Heart right ventricle (tissue), 16 donors: ENCODE measurements at regions of chr17 and their contacts with region 1.

Region 1: GRCh38 chr17:36183001-36183971 is 6.8 kb upstream of the TBC1D3B start:
- DNase-seq: peak; percentile 73 to 85
- ATAC-seq: peak; percentile 84 to 91 (median 88)
- H3K4me3 ChIP-seq: peak overlapping the region; percentile 30 to 87 (median 64)
- H3K27ac ChIP-seq: peak overlapping the region in 6 of 10 donors; percentile 51 to 90 (median 70)
- H3K4me1 ChIP-seq: peaks cover 0 to 18% (median 0%) of the 10 kb centered on the region in 9 donors
- H3K27me3 ChIP-seq: peaks cover 0 to 41% (median 7%) of the 10 kb centered on the region in 7 donors
- CTCF ChIP-seq: peak in 3 of 9 donors; percentile 22 to 36 (median 25)

Region 2: DNA sequence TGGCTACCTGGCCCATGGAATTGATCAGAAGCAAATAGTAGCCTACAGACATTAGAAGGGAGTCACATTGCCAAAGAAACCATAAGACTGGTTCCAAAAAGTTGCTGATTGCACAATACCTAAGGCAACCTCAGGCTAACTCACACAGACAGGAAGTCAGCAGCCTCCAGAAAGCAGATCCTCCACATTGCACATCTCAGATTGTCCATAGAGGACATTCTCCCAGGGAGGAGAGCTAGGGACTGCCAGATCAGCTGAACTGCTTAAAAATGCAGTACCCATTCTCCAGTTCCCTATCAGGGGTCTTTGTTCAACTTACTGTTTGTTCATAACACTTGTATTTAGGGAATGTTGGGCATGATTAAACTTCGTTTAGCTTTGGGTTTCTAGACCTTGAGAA is 97.5 kb before region 1 on chr17:
- intact Hi-C with region 1: no loop called
- DNase-seq: no peak
- ATAC-seq: peak in 6 of 8 donors; percentile 48 to 70 (median 64)
- H3K4me3 ChIP-seq: no peak overlapping the region
- H3K27ac ChIP-seq: peak overlapping the region in 1 of 10 donors; percentile 34
- H3K4me1 ChIP-seq: peaks cover 0 to 56% (median 0%) of the 10 kb centered on the region in 9 donors
- H3K27me3 ChIP-seq: peaks cover 0 to 8% (median 5%) of the 10 kb centered on the region in 7 donors
- CTCF ChIP-seq: no peak

Region 3: GRCh38 chr17:36111068-36111490 is 72.2 kb before region 1 on chr17:
- intact Hi-C with region 1: loop called in 3 of 10 experiments (anchors 2 to 10 kb)
- DNase-seq: no peak
- ATAC-seq: no peak
- H3K4me3 ChIP-seq: no peak overlapping the region
- H3K27ac ChIP-seq: no peak overlapping the region
- H3K4me1 ChIP-seq: peaks cover 0 to 22% (median 0%) of the 10 kb centered on the region in 9 donors
- H3K27me3 ChIP-seq: peaks cover 0 to 25% (median 4%) of the 10 kb centered on the region in 7 donors
- CTCF ChIP-seq: no peak

Region 4: GRCh38 chr17:36117505-36118382 is 65.5 kb before region 1 on chr17:
- intact Hi-C with region 1: loop called in 2 of 10 experiments (anchors 10 kb)
- DNase-seq: no peak
- ATAC-seq: peak in 1 of 8 donors; percentile 20
- H3K4me3 ChIP-seq: no peak overlapping the region
- H3K27ac ChIP-seq: no peak overlapping the region
- H3K4me1 ChIP-seq: no peaks in the 10 kb centered on the region
- H3K27me3 ChIP-seq: no peaks in the 10 kb centered on the region
- CTCF ChIP-seq: no peak

Region 5: DNA sequence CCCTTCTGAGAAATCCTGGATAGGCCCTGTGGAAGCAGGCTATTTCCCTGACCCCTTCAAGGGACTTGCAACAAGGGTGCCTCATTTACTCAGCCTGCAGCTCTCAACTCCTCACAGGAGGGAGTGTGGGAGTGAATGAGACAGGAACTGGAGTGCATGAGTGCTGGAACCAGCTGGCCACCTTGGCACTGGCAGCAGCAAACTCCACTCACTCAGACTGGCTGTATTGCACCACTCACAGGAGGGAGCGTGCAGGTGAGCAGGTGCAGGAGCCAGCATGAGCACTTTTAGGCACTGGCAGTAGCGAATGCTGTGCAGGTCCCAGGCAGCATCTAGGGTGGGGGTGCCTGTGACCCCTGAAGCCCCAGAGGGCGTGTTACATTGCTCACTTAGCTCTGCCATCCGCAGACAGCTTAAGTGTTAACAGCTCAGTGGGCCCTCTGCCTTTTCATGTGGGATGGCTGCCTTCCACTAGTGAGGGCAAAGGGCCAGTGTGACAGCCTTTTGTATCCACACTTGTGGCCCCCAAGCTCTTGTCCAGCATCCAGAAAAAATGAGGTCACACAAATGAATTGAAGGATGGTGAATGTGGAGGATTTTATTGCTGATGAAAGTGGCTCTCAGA is 292.2 kb after region 1 on chr17:
- intact Hi-C with region 1: loop called in 1 of 10 experiments (anchors 5 kb)
- DNase-seq: no peak
- ATAC-seq: no peak
- H3K4me3 ChIP-seq: no peak overlapping the region
- H3K27ac ChIP-seq: no peak overlapping the region
- H3K4me1 ChIP-seq: no peaks in the 10 kb centered on the region
- H3K27me3 ChIP-seq: peaks cover 0 to 48% (median 23%) of the 10 kb centered on the region in 7 donors
- CTCF ChIP-seq: no peak